H1 (cell line): ENCODE measurements at regions of chr2 and their contacts with region 1.

Region 1: GRCh38 chr2:205776139-205776538 is 93.8 kb downstream of the NRP2 start:
- DNase-seq: peak; percentile 64 to 96
- H3K4me3 ChIP-seq: no peak overlapping the region
- H3K27ac ChIP-seq: no peak overlapping the region
- H3K4me1 ChIP-seq: no peaks in the 10 kb centered on the region; a peak in 2 of 7 replicates
- H3K27me3 ChIP-seq: no peaks in the 10 kb centered on the region; a peak in 1 of 7 replicates
- CTCF ChIP-seq: peak; percentile 95 to 99 (median 98)
- EP300 ChIP-seq: no peak
- POLR2A ChIP-seq: no peak
- RAD21 ChIP-seq: peak; percentile 96 to 97

Region 2: DNA sequence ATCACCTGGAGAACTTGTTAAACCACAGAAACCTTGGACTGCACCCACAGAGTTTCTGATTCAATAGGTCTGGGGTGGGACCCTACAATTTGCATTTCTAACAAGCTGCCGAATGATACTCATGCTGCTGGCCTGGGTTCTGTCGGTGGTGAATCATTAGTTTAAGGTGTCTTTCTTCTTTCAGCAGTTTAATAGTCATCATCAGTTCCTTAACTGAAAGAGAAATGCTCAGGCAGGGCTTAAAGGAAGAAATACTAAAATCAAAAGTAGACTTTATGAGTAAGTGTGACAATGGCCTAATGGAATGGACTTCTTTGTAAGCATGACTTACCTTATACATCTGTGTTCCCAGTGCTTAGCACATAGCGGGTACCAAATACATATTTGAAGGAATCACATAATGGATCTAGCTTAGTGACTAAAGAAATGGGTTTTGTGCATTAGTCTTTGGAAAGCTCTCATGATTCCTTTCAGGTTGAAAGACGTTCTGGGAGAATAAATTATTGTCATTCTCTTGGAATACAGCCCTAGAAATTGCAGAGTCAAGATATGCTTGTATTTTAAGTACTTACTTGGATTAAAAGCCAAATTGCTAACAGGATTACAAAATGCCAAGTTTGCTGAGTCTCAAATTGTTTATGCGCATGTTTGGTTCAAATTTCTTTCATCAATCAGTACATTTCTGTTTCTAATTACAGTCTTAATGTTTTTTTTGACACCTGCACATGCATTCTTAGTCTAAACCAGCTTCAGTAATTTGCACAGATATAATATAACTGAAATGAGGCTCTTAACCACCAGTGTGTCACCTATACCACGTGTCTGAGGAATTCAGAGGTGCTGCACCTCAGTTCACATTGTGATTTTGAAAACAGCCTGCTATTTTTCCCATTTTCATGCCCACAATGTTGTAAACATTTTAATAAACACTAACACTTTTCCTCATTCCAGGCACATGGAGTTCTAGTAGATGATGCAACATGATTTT is 314.2 kb before region 1 on chr2:
- CTCF ChIA-PET with region 1: no interaction called
- POLR2A ChIA-PET with region 1: no interaction called
- DNase-seq: no peak
- H3K4me3 ChIP-seq: no peak overlapping the region
- H3K27ac ChIP-seq: no peak overlapping the region
- H3K4me1 ChIP-seq: peaks cover 4 to 26% (median 23%) of the 10 kb centered on the region in 4 experiments; a peak in 6 of 7 replicates
- H3K27me3 ChIP-seq: no peaks in the 10 kb centered on the region
- CTCF ChIP-seq: no peak
- EP300 ChIP-seq: no peak
- POLR2A ChIP-seq: no peak
- RAD21 ChIP-seq: no peak

Region 3: DNA sequence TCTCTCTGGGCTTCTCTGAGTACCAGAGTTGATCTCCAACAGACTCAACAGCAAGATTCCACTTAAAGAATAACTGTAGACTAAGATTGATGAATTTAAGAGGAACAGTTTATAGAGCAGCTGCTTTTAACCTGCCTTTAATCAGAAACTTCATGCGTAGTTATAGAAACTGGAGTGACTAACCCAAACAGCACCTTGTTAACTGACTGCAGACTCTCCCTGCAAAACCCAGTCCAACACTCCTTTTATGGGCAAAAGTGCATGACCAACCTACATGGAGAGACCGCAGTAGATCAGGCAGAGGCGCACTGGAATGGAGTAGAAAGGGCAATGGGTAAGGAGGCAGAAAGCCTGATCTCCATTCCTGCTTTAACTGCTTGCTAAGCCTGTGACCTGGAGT is 16.8 kb after region 1 on chr2:
- CTCF ChIA-PET with region 1: interaction called, 30 read pairs
- POLR2A ChIA-PET with region 1: no interaction called
- DNase-seq: no peak
- H3K4me3 ChIP-seq: no peak overlapping the region
- H3K27ac ChIP-seq: no peak overlapping the region
- H3K4me1 ChIP-seq: peaks cover 0 to 14% (median 4%) of the 10 kb centered on the region in 4 experiments; a peak in 4 of 7 replicates
- H3K27me3 ChIP-seq: no peaks in the 10 kb centered on the region
- CTCF ChIP-seq: no peak
- EP300 ChIP-seq: no peak
- POLR2A ChIP-seq: no peak
- RAD21 ChIP-seq: no peak

Region 4: DNA sequence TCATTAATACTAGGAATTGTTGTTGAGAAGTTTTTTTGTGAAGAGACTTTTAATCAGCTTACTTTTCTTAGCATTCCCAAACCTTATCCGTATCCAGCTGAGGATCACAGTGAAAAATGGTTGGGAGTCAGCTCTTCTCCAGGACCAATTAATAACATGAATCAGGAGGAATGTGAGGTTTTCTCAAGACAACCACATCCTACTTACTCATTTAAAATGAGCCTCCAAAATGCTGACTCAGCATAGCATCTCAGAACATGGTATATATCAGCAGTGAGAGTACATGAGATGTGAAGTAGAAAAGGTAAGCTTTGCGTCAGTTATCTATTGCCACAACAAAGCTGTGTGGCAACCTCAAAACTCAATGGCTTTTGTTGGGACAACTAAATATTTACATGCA is 46.4 kb after region 1 on chr2:
- CTCF ChIA-PET with region 1: interaction called, 12 read pairs
- POLR2A ChIA-PET with region 1: no interaction called
- DNase-seq: no peak
- H3K4me3 ChIP-seq: no peak overlapping the region
- H3K27ac ChIP-seq: no peak overlapping the region
- H3K4me1 ChIP-seq: no peaks in the 10 kb centered on the region
- H3K27me3 ChIP-seq: no peaks in the 10 kb centered on the region
- CTCF ChIP-seq: no peak
- EP300 ChIP-seq: no peak
- POLR2A ChIP-seq: no peak
- RAD21 ChIP-seq: no peak

Region 5: DNA sequence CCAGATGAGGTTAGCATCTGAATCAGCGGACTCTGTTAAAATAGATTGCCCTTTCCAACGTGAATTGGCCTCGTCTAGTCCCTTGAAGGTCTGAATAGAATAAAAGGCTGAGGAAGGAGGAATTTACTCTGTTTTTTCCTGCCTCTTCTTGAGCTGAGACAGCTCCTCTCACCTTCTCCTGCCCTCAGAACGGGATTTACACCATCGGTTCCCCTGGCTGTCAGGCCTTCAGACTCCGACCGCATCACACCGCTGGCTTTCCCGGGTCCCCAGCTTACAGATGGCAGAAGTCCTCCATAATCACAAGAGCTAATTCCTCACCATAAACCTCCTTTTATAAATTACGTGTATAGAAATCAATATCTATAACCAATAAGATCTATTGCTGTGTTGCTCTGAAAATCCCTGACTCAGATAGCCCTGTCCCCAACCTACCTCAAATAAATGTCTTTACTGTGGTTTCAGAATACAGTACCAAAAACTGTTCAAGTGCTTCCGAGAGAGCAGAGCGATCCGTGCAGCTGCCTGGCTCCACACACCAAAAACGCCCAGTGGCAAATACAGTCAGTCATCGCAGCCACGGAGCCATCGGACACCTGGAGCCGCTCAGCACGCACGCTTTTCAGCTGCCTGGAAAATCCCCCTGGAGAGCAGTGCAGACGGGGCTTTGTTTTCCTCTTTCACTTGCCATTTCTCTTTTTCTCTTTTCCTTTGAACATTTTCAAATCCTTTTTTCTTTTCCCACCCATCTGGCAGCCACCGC is 103.0 kb after region 1 on chr2:
- CTCF ChIA-PET with region 1: interaction called, 185 read pairs
- POLR2A ChIA-PET with region 1: interaction called, 3 read pairs
- DNase-seq: no peak
- H3K4me3 ChIP-seq: no peak overlapping the region
- H3K27ac ChIP-seq: no peak overlapping the region
- H3K4me1 ChIP-seq: peaks cover 0 to 5% (median 0%) of the 10 kb centered on the region in 4 experiments; a peak in 2 of 7 replicates
- H3K27me3 ChIP-seq: no peaks in the 10 kb centered on the region
- CTCF ChIP-seq: no peak
- EP300 ChIP-seq: no peak
- POLR2A ChIP-seq: no peak
- RAD21 ChIP-seq: no peak

Region 6: GRCh38 chr2:205903638-205904037 is 127.5 kb after region 1 on chr2:
- CTCF ChIA-PET with region 1: interaction called, 17 read pairs
- POLR2A ChIA-PET with region 1: no interaction called
- DNase-seq: no peak
- H3K4me3 ChIP-seq: no peak overlapping the region
- H3K27ac ChIP-seq: no peak overlapping the region
- H3K4me1 ChIP-seq: no peaks in the 10 kb centered on the region
- H3K27me3 ChIP-seq: no peaks in the 10 kb centered on the region
- CTCF ChIP-seq: peak; percentile 69 to 83 (median 70)
- EP300 ChIP-seq: no peak
- POLR2A ChIP-seq: no peak
- RAD21 ChIP-seq: peak; percentile 58 to 66

Region 7: DNA sequence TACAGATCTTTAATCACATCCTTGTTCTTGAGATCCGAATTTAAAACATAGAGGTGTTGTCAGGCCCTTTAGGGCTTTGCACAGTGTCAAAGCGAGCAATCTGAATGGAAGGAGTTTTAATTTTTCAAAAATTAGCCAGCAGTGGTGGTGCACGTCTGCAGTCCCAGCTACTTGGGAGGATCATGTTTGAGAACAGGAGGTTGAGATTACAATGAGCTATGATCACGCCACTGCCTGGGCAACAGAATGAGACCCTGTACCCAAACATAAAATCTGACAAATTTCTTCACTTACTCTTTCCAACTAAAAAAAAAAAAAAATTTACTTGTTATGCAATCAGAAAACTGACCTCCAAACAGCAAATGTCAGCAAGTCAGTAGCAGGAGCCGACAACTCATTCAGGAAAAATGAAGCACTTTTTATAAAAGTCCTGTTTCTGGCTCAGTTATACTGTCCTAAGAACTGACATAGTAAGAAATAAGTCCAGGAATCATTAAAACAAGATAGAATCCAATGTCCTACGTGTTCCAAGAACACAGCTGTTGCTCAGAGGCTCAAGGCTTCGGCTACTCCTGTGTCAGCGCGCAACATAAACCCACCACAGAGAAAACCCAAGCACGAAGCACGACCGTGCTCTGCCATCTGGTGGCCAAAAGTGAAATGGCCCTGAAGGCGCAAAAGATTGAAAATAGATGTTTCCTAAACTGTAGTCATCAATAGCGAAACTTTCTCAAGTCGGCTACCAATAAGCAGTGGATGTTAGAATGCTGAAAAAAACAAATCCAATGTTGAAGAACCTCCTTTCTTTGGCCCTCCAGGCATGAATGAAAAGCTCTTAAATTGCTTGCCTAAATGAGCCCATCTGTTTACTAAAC is 171.7 kb after region 1 on chr2:
- CTCF ChIA-PET with region 1: interaction called, 33 read pairs
- POLR2A ChIA-PET with region 1: no interaction called
- DNase-seq: peak; percentile 21 to 88
- H3K4me3 ChIP-seq: no peak overlapping the region
- H3K27ac ChIP-seq: no peak overlapping the region
- H3K4me1 ChIP-seq: peaks cover 0 to 3% (median 0%) of the 10 kb centered on the region in 4 experiments; a peak in 1 of 7 replicates
- H3K27me3 ChIP-seq: no peaks in the 10 kb centered on the region
- CTCF ChIP-seq: peak; percentile 83 to 93 (median 90)
- EP300 ChIP-seq: no peak
- POLR2A ChIP-seq: no peak
- RAD21 ChIP-seq: peak; percentile 90 to 94